ENCODE measurements at regions of chr2 and their contacts with region 1.

Region 1: GRCh38 chr2:144230448-144231085 is 289.4 kb downstream of the ZEB2 start:
- DNase-seq: no peak
- H3K4me3 Mint-ChIP-seq: no peak overlapping the region
- H3K27ac Mint-ChIP-seq: peak overlapping the region; percentile 31
- H3K4me1 Mint-ChIP-seq: peaks cover 65% of the 10 kb centered on the region
- H3K27me3 Mint-ChIP-seq: no peaks in the 10 kb centered on the region

Region 2: DNA sequence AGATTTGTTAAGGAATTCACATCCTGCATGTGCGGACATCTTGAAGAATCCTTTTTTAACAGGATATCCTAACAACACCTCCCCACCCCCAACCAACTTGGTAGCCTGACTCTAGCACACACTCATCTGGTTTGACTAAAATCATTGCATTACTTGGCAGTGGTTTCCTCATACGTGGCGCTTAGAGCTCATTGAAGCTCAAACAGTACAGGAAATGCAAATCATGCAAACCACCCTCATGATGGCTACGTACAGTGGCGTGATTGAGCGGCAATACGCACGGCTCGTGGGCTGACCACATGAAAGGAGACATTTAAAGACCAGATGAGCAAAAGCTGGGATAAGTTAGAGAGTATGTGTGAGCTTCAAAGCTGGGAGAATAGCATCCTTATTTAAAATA is 46.8 kb before region 1 on chr2:
- intact Hi-C with region 1: loop called (anchors 1 kb)
- DNase-seq: peak; percentile 76
- H3K4me3 Mint-ChIP-seq: peak overlapping the region; percentile 44
- H3K27ac Mint-ChIP-seq: peak overlapping the region; percentile 94
- H3K4me1 Mint-ChIP-seq: peaks cover 56% of the 10 kb centered on the region
- H3K27me3 Mint-ChIP-seq: no peaks in the 10 kb centered on the region

Region 3: DNA sequence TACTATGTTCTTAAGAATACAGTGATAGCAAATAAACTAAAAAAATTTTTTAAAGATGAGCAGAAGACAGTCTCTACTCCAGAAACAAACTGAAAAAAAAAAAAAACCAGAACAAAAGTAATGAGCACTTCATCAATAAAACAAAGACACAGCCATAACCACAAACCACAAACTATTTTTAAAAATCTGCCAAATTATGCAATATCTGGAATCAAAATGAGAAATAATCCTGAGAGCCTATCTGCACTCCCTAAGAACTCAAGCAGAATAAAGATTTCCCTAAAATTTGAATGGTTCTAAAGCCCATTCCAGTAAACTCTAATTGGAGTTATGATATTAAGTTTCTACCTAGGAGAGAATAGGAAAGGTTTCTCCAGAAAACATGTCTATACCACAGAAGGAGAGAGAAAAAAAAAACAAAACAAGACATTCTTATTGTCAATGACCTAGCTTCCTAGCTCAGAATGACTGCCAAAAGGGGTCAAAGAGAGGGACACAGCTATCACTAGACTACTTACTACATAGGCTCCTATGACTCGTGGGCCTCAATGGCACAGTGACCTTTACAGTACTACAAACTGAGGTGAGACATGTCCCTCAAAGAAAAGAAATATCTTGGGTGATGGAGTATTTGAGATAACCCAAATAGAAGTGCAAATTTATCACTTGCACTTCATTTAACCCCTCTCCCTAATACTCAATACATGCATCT is 26.6 kb after region 1 on chr2:
- intact Hi-C with region 1: loop called (anchors 1 kb)
- DNase-seq: no peak
- H3K4me3 Mint-ChIP-seq: no peak overlapping the region
- H3K27ac Mint-ChIP-seq: peak overlapping the region; percentile 75
- H3K4me1 Mint-ChIP-seq: peaks cover 33% of the 10 kb centered on the region
- H3K27me3 Mint-ChIP-seq: no peaks in the 10 kb centered on the region

Region 4: DNA sequence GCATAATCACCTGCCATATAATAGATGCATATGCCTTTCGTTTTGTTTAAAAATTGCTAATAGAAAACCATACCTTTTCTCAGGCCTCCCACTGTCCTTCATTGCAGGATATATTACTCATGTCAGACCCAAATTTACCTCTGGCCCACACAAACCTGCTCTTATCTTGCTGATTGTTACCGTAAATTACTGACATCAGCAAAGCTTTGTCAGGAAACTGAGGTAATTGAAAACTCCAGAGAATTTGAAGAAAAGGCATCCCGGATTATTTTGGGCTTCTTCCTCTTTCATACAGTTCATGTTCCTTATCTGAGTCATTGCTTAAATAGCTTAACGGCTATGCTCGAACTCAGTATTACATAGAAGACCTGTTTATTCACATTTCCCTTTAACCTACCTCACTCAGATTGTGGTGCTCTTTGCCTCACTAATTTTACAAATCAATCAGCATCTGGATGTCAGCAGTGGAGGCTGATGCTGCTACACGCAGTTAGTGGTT is 143.6 kb after region 1 on chr2:
- intact Hi-C with region 1: loop called (anchors 1 kb)
- DNase-seq: no peak
- H3K4me3 Mint-ChIP-seq: no peak overlapping the region
- H3K27ac Mint-ChIP-seq: peak overlapping the region; percentile 86
- H3K4me1 Mint-ChIP-seq: peaks cover 83% of the 10 kb centered on the region
- H3K27me3 Mint-ChIP-seq: no peaks in the 10 kb centered on the region

Region 5: GRCh38 chr2:144456680-144457079 is 226.1 kb after region 1 on chr2:
- intact Hi-C with region 1: loop called (anchors 1 kb)
- DNase-seq: no peak
- H3K4me3 Mint-ChIP-seq: no peak overlapping the region
- H3K27ac Mint-ChIP-seq: no peak overlapping the region
- H3K4me1 Mint-ChIP-seq: peaks cover 73% of the 10 kb centered on the region
- H3K27me3 Mint-ChIP-seq: no peaks in the 10 kb centered on the region

Measured in activated T-helper 2 cell treated with anti-CD3 and anti-CD28 coated beads, Interferon-gamma antibody, Interleukin-2, Interleukin-4, amounts not matched to agents 10 μg/mL and 5 μg/mL and 100 μg/mL, durations not matched to agents 14 hours and 24 hours and 36 hours (primary cell).